ENCODE measurements at regions of chr2 and their contacts with region 1.

Region 1: DNA sequence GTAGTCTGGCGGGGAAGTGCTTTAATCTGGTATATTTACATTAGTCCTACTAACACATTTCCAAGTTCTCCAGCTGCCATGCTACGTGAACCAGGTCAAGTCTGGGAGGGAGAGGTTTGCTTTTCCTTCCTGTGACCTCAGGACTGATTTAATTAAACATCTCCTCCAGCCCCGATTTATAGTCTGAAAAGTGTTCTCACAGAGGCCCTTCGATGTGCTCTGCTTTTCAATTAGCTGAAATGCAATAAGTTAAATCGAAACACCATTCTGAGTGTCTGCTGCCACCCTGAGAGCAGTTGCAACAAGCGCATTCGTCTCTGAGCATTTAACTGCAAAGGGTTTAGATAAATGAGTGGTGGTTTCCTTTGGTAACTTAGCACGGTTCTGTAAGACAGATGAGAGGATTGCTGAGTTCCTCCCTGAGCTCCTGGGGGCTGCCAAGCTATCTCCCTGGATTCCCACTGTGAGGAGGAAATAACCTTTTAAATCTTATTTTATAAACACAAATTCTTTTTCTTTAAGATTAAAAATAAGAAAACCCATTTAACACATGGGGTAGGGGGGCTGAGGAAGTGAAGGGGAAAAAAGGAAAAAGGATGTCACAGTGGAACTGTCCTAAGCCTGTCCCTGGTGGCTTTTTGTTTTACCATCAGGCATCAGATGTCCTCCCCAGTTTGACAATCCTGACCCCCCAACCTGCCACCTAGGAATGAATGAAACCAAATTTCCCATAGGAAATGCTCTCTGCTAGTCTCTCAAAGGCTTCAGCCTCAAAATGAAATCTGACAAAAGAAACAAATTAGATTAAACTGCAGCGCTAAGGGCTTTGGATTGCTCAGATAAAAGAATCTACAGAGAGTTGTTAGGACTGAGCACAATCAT is 56.5 kb upstream of the CREB1 start:
- DNase-seq: peak; percentile 40
- ATAC-seq: peak; percentile 89
- H3K4me3 Mint-ChIP-seq: no peak overlapping the region
- H3K27ac Mint-ChIP-seq: peak overlapping the region; percentile 64
- H3K4me1 Mint-ChIP-seq: peaks cover 46% of the 10 kb centered on the region
- H3K27me3 Mint-ChIP-seq: no peaks in the 10 kb centered on the region
- CTCF ChIP-seq: no peak

Region 2: DNA sequence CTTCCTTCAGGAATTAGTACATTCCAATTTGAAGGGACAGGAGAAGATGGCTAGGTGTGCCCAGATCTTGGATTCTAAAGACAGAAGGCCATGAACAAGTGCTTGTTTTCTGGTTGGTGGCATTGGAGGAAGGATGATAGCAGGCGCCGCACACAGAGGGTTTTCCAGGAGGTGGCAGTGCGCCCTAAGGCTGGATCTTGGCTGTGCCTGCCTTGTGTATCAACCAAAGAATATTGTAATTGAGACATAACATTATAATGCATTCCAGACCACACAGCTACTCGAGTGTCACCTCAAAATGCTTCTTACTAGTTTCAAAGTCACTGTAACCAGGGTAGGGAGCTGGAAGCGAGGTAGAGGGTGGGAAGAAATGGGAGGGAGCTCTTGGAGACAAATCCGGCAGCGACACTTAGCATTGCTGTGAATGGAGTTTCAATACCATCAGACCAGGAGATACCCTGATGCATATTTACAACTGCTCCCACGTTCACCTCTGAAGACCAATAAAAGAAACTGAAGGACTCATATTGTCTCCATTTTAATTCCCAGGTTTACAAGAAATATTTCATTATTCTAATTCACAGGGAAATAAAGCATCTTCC is 491.4 kb before region 1 on chr2:
- CTCF ChIA-PET with region 1: interaction called, 20 read pairs
- POLR2A ChIA-PET with region 1: no interaction called
- DNase-seq: peak; percentile 72
- ATAC-seq: peak; percentile 84
- H3K4me3 Mint-ChIP-seq: no peak overlapping the region
- H3K27ac Mint-ChIP-seq: no peak overlapping the region
- H3K4me1 Mint-ChIP-seq: peaks cover 35% of the 10 kb centered on the region
- H3K27me3 Mint-ChIP-seq: no peaks in the 10 kb centered on the region
- CTCF ChIP-seq: peak; percentile 33; the same call in 1 of the 2 replicates

Region 3: DNA sequence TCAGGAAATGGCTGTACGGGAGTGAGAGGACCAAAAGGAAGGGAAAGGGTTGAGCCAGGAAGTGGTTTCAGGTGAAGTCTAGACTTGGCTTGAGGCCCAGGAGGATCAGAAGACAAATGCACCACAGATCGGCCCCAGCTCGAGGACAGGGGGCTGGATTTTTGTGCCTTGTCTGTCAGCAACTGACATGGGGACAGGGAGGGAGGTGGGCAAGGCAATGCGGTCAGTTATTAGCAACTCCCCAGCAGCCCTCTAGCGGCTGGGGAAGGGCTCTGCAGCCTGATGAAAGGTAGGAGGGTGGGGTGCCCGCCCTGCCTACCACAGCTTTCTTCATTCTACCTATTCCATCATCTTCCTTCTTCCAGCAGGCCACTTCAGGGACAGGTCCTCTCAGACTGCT is 484.0 kb before region 1 on chr2:
- CTCF ChIA-PET with region 1: interaction called, 11 read pairs
- POLR2A ChIA-PET with region 1: no interaction called
- DNase-seq: peak; percentile 52
- ATAC-seq: peak; percentile 98
- H3K4me3 Mint-ChIP-seq: no peak overlapping the region
- H3K27ac Mint-ChIP-seq: no peak overlapping the region
- H3K4me1 Mint-ChIP-seq: peaks cover 10% of the 10 kb centered on the region
- H3K27me3 Mint-ChIP-seq: no peaks in the 10 kb centered on the region
- CTCF ChIP-seq: peak; percentile 92

Region 4: GRCh38 chr2:207341804-207342203 is 131.5 kb before region 1 on chr2:
- CTCF ChIA-PET with region 1: interaction called, 11 read pairs
- POLR2A ChIA-PET with region 1: interaction called, 3 read pairs
- DNase-seq: no peak
- ATAC-seq: peak; percentile 89
- H3K4me3 Mint-ChIP-seq: no peak overlapping the region
- H3K27ac Mint-ChIP-seq: no peak overlapping the region
- H3K4me1 Mint-ChIP-seq: peaks cover 38% of the 10 kb centered on the region
- H3K27me3 Mint-ChIP-seq: no peaks in the 10 kb centered on the region; the same call in 1 of the 2 replicates
- CTCF ChIP-seq: no peak

Region 5: GRCh38 chr2:207487650-207488311 is 14.5 kb after region 1 on chr2:
- CTCF ChIA-PET with region 1: no interaction called
- POLR2A ChIA-PET with region 1: no interaction called
- DNase-seq: no peak
- ATAC-seq: no peak; the same call in 1 of the 2 replicates
- H3K4me3 Mint-ChIP-seq: no peak overlapping the region
- H3K27ac Mint-ChIP-seq: peak overlapping the region; percentile 46
- H3K4me1 Mint-ChIP-seq: peaks cover 6% of the 10 kb centered on the region; the same call in 1 of the 2 replicates
- H3K27me3 Mint-ChIP-seq: no peaks in the 10 kb centered on the region
- CTCF ChIP-seq: no peak